PC-9 (cell line): ENCODE measurements at regions of chr14 and their contacts with region 1.

Region 1: GRCh38 chr14:70714055-70714621 is 72.4 kb downstream of the TTC9 start:
- DNase-seq: peak; percentile 41 to 55
- H3K4me3 ChIP-seq: no peak overlapping the region
- H3K27ac ChIP-seq: peak overlapping the region; percentile 51; the same call in 1 of the 2 replicates
- H3K4me1 ChIP-seq: peaks cover 22% of the 10 kb centered on the region
- H3K27me3 ChIP-seq: no peaks in the 10 kb centered on the region
- CTCF ChIP-seq: peak; percentile 98

Region 2: DNA sequence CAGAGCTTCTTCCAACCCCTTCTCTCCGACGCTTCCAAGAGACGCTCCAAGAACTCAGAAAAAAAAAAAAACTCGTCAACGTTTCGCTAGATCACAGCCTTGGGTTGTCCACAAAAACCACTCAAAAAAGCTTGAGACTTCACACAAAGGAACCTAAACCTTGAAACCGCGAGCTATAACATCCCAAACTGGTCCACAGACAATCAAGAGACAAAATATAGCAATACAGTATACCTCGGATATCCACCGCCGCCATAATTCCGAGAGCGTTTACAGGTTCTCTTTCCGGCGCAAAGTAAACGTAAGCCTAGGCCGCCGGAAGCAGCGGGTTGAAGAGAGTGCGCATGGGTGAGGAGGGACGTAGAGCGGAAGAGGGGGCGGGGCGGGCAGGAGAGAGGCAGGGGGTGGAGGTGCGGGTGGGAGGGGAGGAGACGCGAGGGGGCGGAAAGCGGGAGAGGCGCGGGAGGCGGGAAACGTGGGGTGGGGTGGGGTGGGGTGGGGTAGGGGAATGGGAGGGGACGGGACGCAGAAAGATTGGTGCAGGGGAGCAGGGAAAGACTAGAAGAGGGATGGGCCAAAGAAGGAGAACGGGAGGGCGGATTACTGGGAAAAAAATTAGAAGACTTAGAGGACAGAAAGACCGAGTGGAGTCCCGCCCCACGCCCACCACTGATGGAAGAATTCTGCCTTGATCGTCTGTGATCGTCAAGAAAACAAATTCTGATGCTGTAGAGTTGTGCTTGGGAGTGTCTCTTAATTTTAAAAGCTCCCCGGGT is 113.6 kb before region 1 on chr14 and contains the start of gene MED6:
- CTCF ChIA-PET with region 1: interaction called, 3 read pairs
- POLR2A ChIA-PET with region 1: interaction called, 11 read pairs
- intact Hi-C with region 1: loop called (anchors 1 kb)
- DNase-seq: peak; percentile 86 to 91
- H3K4me3 ChIP-seq: peak within 1 kb of the TSS; percentile 68
- H3K27ac ChIP-seq: peak within 1 kb of the TSS; percentile 58
- H3K4me1 ChIP-seq: peaks cover 19% of the 10 kb centered on the region
- H3K27me3 ChIP-seq: no peaks in the 10 kb centered on the region
- CTCF ChIP-seq: no peak
- total RNA-seq, gene MED6: 46.5 and 58.2 TPM in 2 replicates

Region 3: GRCh38 chr14:70640938-70641547 is 73.1 kb before region 1 on chr14:
- CTCF ChIA-PET with region 1: no interaction called
- POLR2A ChIA-PET with region 1: no interaction called
- intact Hi-C with region 1: loop called (anchors 1 kb)
- DNase-seq: peak; percentile 47 to 77
- H3K4me3 ChIP-seq: peak overlapping the region; percentile 97
- H3K27ac ChIP-seq: 0 out of 2 replicates have a peak overlapping the region, but pooled peaks have one; percentile 1
- H3K4me1 ChIP-seq: peaks cover 32% of the 10 kb centered on the region
- H3K27me3 ChIP-seq: no peaks in the 10 kb centered on the region
- CTCF ChIP-seq: no peak

Region 4: GRCh38 chr14:70698288-70698687 is 15.8 kb before region 1 on chr14:
- CTCF ChIA-PET with region 1: interaction called, 18 read pairs
- POLR2A ChIA-PET with region 1: interaction called, 5 read pairs
- intact Hi-C with region 1: no loop called
- DNase-seq: peak; percentile 73 to 87
- H3K4me3 ChIP-seq: peak overlapping the region; percentile 22; the same call in 1 of the 2 replicates
- H3K27ac ChIP-seq: peak overlapping the region; percentile 97
- H3K4me1 ChIP-seq: peaks cover 45% of the 10 kb centered on the region
- H3K27me3 ChIP-seq: no peaks in the 10 kb centered on the region
- CTCF ChIP-seq: no peak

Region 5: GRCh38 chr14:70771781-70772212 is 57.7 kb after region 1 on chr14:
- CTCF ChIA-PET with region 1: no interaction called
- POLR2A ChIA-PET with region 1: no interaction called
- intact Hi-C with region 1: no loop called
- DNase-seq: no peak
- H3K4me3 ChIP-seq: no peak overlapping the region
- H3K27ac ChIP-seq: no peak overlapping the region
- H3K4me1 ChIP-seq: peaks cover 13% of the 10 kb centered on the region; the same call in 1 of the 2 replicates
- H3K27me3 ChIP-seq: no peaks in the 10 kb centered on the region
- CTCF ChIP-seq: no peak

Region 6: DNA sequence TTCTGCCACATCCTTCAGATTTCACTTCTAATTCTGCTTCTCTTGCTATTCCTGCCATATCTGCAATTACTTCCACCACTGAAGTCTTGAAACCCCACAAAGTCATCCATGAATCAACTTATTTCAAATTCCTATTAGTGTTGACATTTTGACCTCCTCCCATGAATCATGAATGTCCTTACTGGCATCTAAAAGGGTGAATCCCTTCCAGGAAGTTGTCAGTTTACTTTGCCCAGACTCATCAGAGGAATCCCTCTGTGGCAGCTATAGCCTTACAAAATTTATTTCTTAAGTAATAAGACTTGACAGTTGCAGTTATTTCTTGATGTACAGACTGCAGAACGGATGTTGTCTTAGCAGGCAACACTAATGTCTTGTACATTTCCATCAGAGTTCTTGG is 356.0 kb after region 1 on chr14:
- CTCF ChIA-PET with region 1: interaction called, 10 read pairs
- POLR2A ChIA-PET with region 1: no interaction called
- intact Hi-C with region 1: no loop called
- DNase-seq: no peak
- H3K4me3 ChIP-seq: no peak overlapping the region
- H3K27ac ChIP-seq: no peak overlapping the region
- H3K4me1 ChIP-seq: no peaks in the 10 kb centered on the region
- H3K27me3 ChIP-seq: no peaks in the 10 kb centered on the region
- CTCF ChIP-seq: no peak